ENCODE measurements at regions of chr5 and their contacts with region 1.

Region 1: GRCh38 chr5:10452768-10453331 is 11.2 kb downstream of the ROPN1L start:
- DNase-seq: peak; percentile 82
- H3K4me3 ChIP-seq: no peak overlapping the region
- H3K27ac ChIP-seq: no peak overlapping the region
- H3K4me1 ChIP-seq: peaks cover 5% of the 10 kb centered on the region
- CTCF ChIP-seq: peak; percentile 94

Region 2: DNA sequence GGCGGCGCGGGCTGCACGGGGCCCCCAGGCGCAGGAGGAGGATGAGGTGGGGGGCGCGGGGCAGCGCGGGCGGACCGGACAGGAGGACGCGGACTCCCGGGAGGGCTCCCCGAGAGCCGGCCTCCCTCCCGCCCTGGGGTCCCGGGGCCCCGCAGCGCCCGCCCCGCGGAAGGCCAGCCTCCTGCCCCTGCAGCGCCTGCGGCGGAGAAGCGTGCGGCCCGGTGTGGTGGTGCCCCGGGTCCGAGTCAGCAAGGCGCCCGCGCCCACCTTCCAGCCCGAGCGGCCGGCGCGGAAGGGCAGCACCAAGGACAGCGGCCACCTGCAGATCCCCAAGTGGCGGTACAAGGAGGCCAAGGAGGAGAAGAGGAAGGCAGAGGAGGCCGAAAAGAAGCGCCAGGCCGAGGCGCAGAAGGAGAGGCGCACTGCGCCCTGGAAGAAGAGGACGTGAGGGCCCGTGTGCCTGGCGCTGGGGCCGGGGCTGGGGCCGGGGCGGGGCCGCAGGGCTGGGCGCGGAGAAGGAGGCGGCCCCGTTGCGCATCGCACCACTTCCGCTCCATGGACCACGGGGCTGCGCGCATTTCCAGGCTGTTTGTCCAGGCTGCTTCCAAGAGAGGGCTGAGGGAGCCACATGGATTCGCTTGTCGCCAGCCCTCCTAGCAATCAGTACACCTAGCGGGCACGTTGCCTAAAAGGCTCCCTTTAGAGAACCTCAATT is 197.0 kb after region 1 on chr5:
- CTCF ChIA-PET with region 1: no interaction called
- POLR2A ChIA-PET with region 1: no interaction called
- intact Hi-C with region 1: no loop called
- DNase-seq: no peak
- H3K4me3 ChIP-seq: no peak overlapping the region
- H3K27ac ChIP-seq: no peak overlapping the region
- H3K4me1 ChIP-seq: peaks cover 8% of the 10 kb centered on the region
- CTCF ChIP-seq: no peak

Region 3: DNA sequence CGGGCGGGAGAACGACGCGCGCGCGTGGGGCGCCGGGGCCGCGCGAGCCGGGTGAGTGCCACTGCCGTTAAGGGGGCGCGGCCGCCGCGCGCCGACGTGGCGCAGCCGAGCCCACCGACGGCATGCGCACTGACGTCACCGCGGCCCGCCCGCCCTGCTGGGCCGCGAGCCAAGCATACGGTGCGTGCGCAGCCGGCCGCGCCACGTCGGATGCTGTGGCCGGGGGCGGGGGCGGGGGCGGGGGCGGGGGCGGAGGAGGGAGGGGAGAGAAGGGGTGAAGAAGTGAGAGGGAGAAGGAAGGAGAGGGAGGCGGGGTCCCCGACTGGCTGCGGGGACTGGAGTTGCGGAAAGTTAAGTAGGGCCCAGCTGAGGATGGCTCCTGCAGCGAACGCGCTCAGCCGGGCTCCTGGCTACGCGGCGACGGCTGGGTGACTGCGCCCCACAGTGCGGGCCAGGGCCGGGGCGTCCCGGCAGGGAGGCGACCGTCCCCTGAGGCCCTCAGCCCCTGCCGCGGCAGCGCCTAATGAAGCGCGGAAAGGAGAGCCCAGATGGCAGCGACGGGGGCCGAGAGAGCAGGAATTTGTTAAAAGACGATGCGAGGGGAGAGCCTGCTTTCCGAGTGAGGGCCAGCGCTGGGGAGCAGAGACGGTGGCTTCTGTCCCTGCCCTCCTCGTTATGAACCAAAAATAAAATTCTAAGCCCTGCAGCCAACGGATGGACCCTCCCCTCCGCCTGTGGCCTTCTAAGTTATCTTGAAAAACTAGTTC is 308.5 kb after region 1 on chr5 and contains the start of gene DAP:
- CTCF ChIA-PET with region 1: no interaction called
- POLR2A ChIA-PET with region 1: no interaction called
- intact Hi-C with region 1: loop called (anchors 10 kb)
- DNase-seq: peak; percentile 95
- H3K4me3 ChIP-seq: peak within 1 kb of the TSS; percentile 85
- H3K27ac ChIP-seq: peak within 1 kb of the TSS; percentile 75
- H3K4me1 ChIP-seq: peaks cover 44% of the 10 kb centered on the region
- CTCF ChIP-seq: no peak
- total RNA-seq, gene DAP: 15.9 and 21.5 TPM in 2 replicates

Region 4: GRCh38 chr5:10863763-10864383 is 411.0 kb after region 1 on chr5:
- CTCF ChIA-PET with region 1: no interaction called
- POLR2A ChIA-PET with region 1: no interaction called
- intact Hi-C with region 1: loop called (anchors 10 kb)
- DNase-seq: peak; percentile 59
- H3K4me3 ChIP-seq: no peak overlapping the region
- H3K27ac ChIP-seq: no peak overlapping the region
- H3K4me1 ChIP-seq: no peaks in the 10 kb centered on the region
- CTCF ChIP-seq: peak; percentile 95